Activated naive CD4-positive, alpha-beta T cell treated with anti-CD3 and anti-CD28 coated beads for 36 hours (primary cell): ENCODE measurements at regions of chr2 and their contacts with region 1.

Region 1: GRCh38 chr2:10832203-10832936 is 19.8 kb upstream of the PDIA6 start:
- DNase-seq: peak; percentile 90
- H3K4me3 Mint-ChIP-seq: no peak overlapping the region
- H3K27ac Mint-ChIP-seq: no peak overlapping the region
- H3K4me1 Mint-ChIP-seq: peaks cover 3% of the 10 kb centered on the region
- H3K27me3 Mint-ChIP-seq: no peaks in the 10 kb centered on the region

Region 2: DNA sequence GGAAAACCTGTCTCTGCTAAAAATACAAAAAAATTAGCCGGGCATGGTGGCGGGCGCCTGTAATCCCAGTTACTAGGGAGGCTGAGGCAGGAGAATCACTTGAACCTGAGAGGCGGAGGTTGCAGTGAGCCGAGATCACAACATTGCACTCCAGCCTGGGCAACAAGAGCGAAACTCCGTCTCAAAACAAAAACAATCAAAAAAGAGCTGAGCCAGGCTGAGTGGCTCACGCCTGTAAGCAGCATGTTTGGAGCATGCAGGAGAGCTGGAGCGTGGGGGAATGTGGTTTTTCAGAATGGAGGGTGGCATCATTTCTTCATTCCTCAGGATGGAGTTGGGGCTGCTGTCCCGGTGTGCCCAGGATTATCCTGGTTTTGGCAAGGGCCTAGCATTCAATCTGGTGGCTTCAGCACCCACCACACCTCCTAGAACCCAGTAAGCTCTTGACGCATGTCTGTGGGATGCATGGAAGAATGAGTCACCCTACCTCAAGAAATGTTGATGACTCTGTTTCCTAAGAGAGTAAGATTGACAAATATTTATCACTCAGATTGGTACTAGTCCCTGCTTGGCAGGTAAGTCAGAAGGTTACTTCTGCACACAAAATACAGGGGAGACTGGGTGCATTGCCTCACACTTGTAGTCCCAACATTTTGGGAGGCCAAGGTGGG is 294.0 kb before region 1 on chr2:
- CTCF ChIA-PET with region 1: no interaction called
- intact Hi-C with region 1: no loop called
- DNase-seq: no peak
- H3K4me3 Mint-ChIP-seq: no peak overlapping the region
- H3K27ac Mint-ChIP-seq: no peak overlapping the region
- H3K4me1 Mint-ChIP-seq: peaks cover 3% of the 10 kb centered on the region
- H3K27me3 Mint-ChIP-seq: peaks cover 5% of the 10 kb centered on the region

Region 3: GRCh38 chr2:10787176-10787968 is 45.0 kb before region 1 on chr2:
- CTCF ChIA-PET with region 1: interaction called, 3 read pairs
- intact Hi-C with region 1: loop called (anchors 1 kb)
- DNase-seq: peak; percentile 62
- H3K4me3 Mint-ChIP-seq: no peak overlapping the region
- H3K27ac Mint-ChIP-seq: no peak overlapping the region
- H3K4me1 Mint-ChIP-seq: peaks cover 18% of the 10 kb centered on the region
- H3K27me3 Mint-ChIP-seq: no peaks in the 10 kb centered on the region

Region 4: DNA sequence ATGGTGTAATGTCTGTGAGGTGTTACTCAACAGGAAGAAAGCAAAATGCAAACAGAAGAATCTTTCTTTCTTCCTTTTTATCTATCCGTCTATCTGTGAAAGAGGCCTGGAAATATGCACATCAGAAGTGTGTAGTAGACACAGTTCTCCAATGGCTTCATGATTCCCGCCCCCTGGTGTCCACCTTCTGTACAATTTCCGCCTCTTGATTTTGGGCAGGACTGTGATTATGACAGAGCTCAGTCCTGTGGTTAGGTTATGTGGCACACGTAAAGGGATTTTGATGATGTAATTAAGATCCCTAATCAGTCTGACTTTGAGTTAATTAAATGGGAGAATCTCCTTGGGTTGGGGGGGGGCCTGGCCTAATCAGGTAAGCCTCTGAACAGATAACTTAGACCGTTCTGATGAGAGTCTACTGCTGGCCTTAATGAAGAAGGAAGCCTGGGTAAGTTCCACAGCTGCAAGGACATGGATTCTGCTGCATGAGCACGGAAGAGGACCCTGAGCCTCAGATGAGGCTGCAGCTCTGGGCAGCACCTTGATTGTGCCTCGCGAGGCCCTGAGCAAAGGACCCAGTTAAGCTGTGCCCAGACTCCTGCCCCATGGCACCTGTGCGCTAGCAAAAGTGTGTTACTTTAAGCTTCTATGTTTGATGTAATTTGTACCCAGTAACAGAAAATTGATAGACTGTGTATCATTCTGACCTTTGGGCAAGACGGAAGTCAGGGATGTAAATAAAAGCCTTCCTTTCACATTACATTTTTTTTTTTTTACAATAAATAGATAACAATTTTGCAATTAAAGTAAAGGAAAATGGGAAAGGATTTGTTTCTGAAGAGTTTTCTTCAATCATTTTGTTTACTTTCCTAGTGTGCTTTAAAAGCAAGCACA is 68.1 kb after region 1 on chr2:
- CTCF ChIA-PET with region 1: interaction called, 4 read pairs
- intact Hi-C with region 1: loop called (anchors 1 kb)
- DNase-seq: peak; percentile 23
- H3K4me3 Mint-ChIP-seq: no peak overlapping the region
- H3K27ac Mint-ChIP-seq: no peak overlapping the region
- H3K4me1 Mint-ChIP-seq: no peaks in the 10 kb centered on the region
- H3K27me3 Mint-ChIP-seq: peaks cover 4% of the 10 kb centered on the region

Region 5: DNA sequence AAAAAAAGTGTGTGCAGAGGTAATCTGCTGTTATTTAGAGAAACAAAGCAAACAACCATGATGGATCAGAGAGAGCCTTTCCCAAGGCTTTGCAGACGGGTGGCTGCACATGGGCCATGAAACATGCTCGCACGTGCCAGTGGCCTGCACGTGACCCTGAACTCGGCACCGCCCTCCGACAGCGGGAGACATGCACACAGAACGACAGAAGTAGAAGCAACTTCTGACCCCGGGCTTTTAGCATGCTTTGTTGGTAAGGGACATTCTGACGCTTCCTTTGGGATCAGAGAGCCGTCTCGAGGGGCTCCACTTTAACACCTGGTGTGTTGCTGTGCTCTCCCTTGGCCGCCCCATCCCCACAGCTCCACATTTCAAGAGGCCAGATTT is 191.9 kb after region 1 on chr2:
- CTCF ChIA-PET with region 1: no interaction called
- intact Hi-C with region 1: loop called (anchors 10 kb)
- DNase-seq: no peak
- H3K4me3 Mint-ChIP-seq: no peak overlapping the region
- H3K27ac Mint-ChIP-seq: no peak overlapping the region
- H3K4me1 Mint-ChIP-seq: no peaks in the 10 kb centered on the region
- H3K27me3 Mint-ChIP-seq: no peaks in the 10 kb centered on the region

Region 6: DNA sequence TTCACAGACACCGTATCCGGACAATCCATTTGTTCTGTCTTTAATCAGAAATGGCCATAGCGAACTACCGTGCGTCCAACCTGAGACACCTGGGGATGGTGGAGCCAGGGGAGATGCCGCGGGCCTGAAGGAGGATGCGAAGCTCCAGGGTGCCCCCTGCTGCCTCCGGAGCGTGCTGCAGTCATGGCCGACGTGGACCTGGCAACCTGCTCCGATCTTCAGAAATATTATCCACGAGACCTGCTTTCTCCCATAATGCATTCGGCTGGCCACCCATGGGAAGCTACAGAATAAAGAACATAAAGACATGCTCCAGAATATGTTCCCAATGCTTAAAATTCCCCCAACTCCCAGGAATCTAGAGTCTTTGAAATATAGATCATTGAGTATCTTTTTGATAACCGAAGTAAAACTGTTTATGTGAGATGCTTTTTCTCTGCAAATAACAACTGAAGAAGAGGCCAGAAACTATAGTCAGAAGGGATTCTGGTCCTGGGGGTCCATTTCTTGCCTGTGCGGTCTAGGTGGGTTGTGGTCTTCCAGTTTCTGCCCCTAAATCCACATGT is 292.2 kb after region 1 on chr2:
- CTCF ChIA-PET with region 1: interaction called, 93 read pairs
- intact Hi-C with region 1: loop called (anchors 1 kb)
- DNase-seq: peak; percentile 85
- H3K4me3 Mint-ChIP-seq: no peak overlapping the region
- H3K27ac Mint-ChIP-seq: no peak overlapping the region
- H3K4me1 Mint-ChIP-seq: peaks cover 2% of the 10 kb centered on the region
- H3K27me3 Mint-ChIP-seq: no peaks in the 10 kb centered on the region